IMR-90 (cell line): ENCODE measurements at regions of chr3 and their contacts with region 1.

Region 1: GRCh38 chr3:112405845-112406244 is 72.9 kb downstream of the CD200 start:
- DNase-seq: peak; percentile 40
- ATAC-seq: 0 out of 2 replicates have a peak, but pooled peaks have one; percentile 27
- H3K4me3 ChIP-seq: no peak overlapping the region
- H3K27ac ChIP-seq: no peak overlapping the region
- H3K4me1 ChIP-seq: no peaks in the 10 kb centered on the region
- H3K27me3 ChIP-seq: no peaks in the 10 kb centered on the region
- CTCF ChIP-seq: no peak
- POLR2A ChIP-seq: no peak
- RAD21 ChIP-seq: no peak

Region 2: DNA sequence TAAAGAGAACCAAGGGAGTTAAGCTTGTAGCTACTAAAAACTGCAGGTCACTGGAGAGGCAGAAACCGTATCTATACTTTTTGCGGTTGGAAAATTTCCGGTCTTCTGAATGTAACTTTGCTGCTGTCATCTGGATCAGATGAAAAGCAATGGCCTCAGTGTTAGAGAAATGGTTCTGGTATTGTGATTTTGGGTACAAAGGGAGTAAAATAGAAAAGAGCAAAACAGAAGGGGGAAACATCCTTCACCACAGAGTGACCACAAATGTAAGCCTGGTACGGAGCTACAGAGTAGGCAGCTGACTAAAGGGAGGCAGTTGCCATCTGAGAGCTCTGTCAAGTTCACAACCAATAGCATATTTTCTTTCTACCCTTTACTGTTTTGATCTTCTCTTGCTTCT is 858.2 kb before region 1 on chr3:
- CTCF ChIA-PET with region 1: interaction called, 10 read pairs
- POLR2A ChIA-PET with region 1: no interaction called
- dilution Hi-C with region 1: no loop called
- in situ Hi-C with region 1: no loop called
- intact Hi-C with region 1: no loop called
- DNase-seq: no peak
- ATAC-seq: no peak
- H3K4me3 ChIP-seq: no peak overlapping the region
- H3K27ac ChIP-seq: no peak overlapping the region
- H3K4me1 ChIP-seq: no peaks in the 10 kb centered on the region
- H3K27me3 ChIP-seq: no peaks in the 10 kb centered on the region; the same call in 1 of the 2 replicates
- CTCF ChIP-seq: no peak
- POLR2A ChIP-seq: no peak
- RAD21 ChIP-seq: no peak